ENCODE measurements at regions of chr13 and their contacts with region 1.

Region 1: GRCh38 chr13:99656092-99656745 is 154.9 kb downstream of the TM9SF2 start:
- DNase-seq: peak; percentile 78
- H3K4me3 Mint-ChIP-seq: peak overlapping the region; percentile 53
- H3K27ac Mint-ChIP-seq: peak overlapping the region; percentile 90
- H3K4me1 Mint-ChIP-seq: peaks cover 14% of the 10 kb centered on the region
- H3K27me3 Mint-ChIP-seq: no peaks in the 10 kb centered on the region
- CTCF ChIP-seq: peak; percentile 91

Region 2: DNA sequence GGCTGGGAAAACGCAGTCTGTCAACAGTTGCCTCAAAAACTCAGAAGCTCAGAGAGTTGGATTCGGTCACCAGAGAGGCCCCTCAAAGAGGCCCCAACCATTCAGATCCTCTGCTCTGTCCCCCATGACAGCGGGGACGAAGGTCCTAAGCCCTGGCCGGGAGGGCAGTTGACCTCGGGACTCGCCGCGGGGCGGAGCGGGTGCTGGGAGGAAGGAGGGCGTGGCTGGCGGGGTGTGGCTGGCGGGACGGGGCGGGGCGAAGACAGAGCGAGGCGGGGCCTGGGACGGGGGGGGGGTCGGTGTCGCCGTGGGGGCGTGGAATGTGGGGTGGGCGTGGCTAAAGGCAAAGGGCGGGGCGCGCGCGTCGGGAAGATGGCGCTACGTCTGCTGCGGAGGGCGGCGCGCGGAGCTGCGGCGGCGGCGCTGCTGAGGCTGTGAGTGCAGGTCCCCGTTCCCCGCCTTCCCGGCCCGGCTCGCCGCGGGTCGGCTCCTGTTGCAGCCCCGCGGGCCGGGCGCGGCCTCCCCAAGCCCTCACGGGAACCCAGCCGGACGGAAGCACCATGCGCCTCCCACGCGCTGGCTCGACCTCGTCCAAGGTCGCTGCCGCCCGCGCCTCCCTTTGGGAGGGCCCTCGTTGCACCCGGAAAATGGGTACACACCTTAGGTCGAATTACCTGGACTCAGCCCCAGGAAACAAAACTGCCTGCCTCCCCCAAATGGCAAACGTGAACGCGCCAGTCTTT is 49.7 kb before region 1 on chr13:
- CTCF ChIA-PET with region 1: no interaction called
- POLR2A ChIA-PET with region 1: interaction called, 3 read pairs
- intact Hi-C with region 1: loop called (anchors 2 kb)
- DNase-seq: peak; percentile 82
- H3K4me3 Mint-ChIP-seq: peak within 1 kb of the TSS; percentile 70
- H3K27ac Mint-ChIP-seq: peak within 1 kb of the TSS; percentile 14
- H3K4me1 Mint-ChIP-seq: peaks cover 11% of the 10 kb centered on the region
- H3K27me3 Mint-ChIP-seq: no peaks in the 10 kb centered on the region
- CTCF ChIP-seq: no peak

Region 3: GRCh38 chr13:99916366-99917103 is 260.3 kb after region 1 on chr13:
- CTCF ChIA-PET with region 1: interaction called, 35 read pairs
- POLR2A ChIA-PET with region 1: no interaction called
- intact Hi-C with region 1: loop called (anchors 1 kb)
- DNase-seq: peak; percentile 86
- H3K4me3 Mint-ChIP-seq: no peak overlapping the region
- H3K27ac Mint-ChIP-seq: no peak overlapping the region
- H3K4me1 Mint-ChIP-seq: peaks cover 6% of the 10 kb centered on the region
- H3K27me3 Mint-ChIP-seq: no peaks in the 10 kb centered on the region
- CTCF ChIP-seq: peak; percentile 91

Region 4: GRCh38 chr13:100235311-100235901 is 579.2 kb after region 1 on chr13:
- CTCF ChIA-PET with region 1: interaction called, 28 read pairs
- POLR2A ChIA-PET with region 1: interaction called, 3 read pairs
- intact Hi-C with region 1: loop called (anchors 1 kb)
- DNase-seq: peak; percentile 75
- H3K4me3 Mint-ChIP-seq: peak overlapping the region; percentile 26
- H3K27ac Mint-ChIP-seq: no peak overlapping the region
- H3K4me1 Mint-ChIP-seq: peaks cover 14% of the 10 kb centered on the region
- H3K27me3 Mint-ChIP-seq: no peaks in the 10 kb centered on the region
- CTCF ChIP-seq: peak; percentile 68

Region 5: GRCh38 chr13:100542826-100543156 is 886.6 kb after region 1 on chr13:
- CTCF ChIA-PET with region 1: interaction called, 3 read pairs
- POLR2A ChIA-PET with region 1: no interaction called
- intact Hi-C with region 1: loop called (anchors 1 kb)
- DNase-seq: peak; percentile 52
- H3K4me3 Mint-ChIP-seq: no peak overlapping the region
- H3K27ac Mint-ChIP-seq: no peak overlapping the region
- H3K4me1 Mint-ChIP-seq: peaks cover 5% of the 10 kb centered on the region
- H3K27me3 Mint-ChIP-seq: no peaks in the 10 kb centered on the region
- CTCF ChIP-seq: peak; percentile 27

Region 6: GRCh38 chr13:101098873-101099272 is 1442.7 kb after region 1 on chr13:
- CTCF ChIA-PET with region 1: interaction called, 10 read pairs
- POLR2A ChIA-PET with region 1: no interaction called
- intact Hi-C with region 1: loop called (anchors 5 kb)
- DNase-seq: no peak
- H3K4me3 Mint-ChIP-seq: no peak overlapping the region
- H3K27ac Mint-ChIP-seq: no peak overlapping the region
- H3K4me1 Mint-ChIP-seq: no peaks in the 10 kb centered on the region
- H3K27me3 Mint-ChIP-seq: no peaks in the 10 kb centered on the region
- CTCF ChIP-seq: no peak